ENCODE measurements at regions of chr2 and their contacts with region 1.

Region 1: GRCh38 chr2:105362862-105363591 is 25.7 kb downstream of the C2orf49 start:
- DNase-seq: no peak
- H3K4me3 ChIP-seq: no peak overlapping the region
- CTCF ChIP-seq: no peak

Region 2: DNA sequence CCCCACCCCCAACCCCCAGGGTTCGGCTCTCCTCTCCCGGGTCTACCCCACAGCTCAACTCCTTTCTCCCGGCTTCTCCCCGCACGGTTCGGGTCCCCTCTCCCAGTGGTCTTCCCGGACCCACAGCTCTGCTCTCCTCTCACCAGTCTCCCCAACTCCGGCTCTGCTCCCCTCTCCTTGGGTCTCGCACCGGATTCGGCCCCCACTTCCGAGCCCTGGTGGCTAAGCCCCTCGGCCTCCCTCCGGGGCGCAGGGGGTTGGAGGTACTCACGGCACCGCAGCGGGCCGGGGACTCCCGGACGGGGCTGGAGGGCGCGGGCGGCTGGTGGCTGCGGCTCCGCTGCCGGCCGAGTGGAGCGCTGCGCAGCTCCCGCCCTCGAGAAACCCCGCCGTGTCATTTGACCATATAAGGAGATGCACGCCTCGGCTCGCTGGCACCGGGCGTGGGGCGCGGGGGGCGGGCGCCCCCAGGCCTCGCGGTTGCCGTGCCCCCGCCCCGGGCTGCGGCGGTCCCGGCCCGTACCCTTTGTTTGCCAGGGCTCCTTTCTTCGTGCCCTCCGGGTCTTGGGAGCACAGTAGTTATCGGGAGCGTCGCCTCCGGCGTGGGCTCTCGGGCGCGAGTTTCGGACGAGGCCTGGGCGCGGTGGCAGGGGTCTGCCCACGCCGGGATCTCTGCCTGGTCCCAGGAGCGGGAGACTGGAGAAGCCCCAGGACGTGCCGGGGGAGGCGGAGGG is 35.8 kb after region 1 on chr2 and contains the start of gene FHL2:
- in situ Hi-C with region 1: no loop called
- DNase-seq: peak; percentile 44
- H3K4me3 ChIP-seq: peak within 1 kb of the TSS; percentile 99
- CTCF ChIP-seq: peak; percentile 49

Region 3: GRCh38 chr2:105521205-105521604 is 158.2 kb after region 1 on chr2:
- in situ Hi-C with region 1: loop called (anchors 5 kb)
- DNase-seq: peak; percentile 12
- H3K4me3 ChIP-seq: no peak overlapping the region
- CTCF ChIP-seq: no peak